GM10248 (cell line): ENCODE measurements at regions of chr16 and their contacts with region 1.

Region 1: GRCh38 chr16:15765880-15766279 is 90.9 kb downstream of the MYH11 start:
- DNase-seq: peak; percentile 80
- CTCF ChIP-seq: peak; percentile 71

Region 2: DNA sequence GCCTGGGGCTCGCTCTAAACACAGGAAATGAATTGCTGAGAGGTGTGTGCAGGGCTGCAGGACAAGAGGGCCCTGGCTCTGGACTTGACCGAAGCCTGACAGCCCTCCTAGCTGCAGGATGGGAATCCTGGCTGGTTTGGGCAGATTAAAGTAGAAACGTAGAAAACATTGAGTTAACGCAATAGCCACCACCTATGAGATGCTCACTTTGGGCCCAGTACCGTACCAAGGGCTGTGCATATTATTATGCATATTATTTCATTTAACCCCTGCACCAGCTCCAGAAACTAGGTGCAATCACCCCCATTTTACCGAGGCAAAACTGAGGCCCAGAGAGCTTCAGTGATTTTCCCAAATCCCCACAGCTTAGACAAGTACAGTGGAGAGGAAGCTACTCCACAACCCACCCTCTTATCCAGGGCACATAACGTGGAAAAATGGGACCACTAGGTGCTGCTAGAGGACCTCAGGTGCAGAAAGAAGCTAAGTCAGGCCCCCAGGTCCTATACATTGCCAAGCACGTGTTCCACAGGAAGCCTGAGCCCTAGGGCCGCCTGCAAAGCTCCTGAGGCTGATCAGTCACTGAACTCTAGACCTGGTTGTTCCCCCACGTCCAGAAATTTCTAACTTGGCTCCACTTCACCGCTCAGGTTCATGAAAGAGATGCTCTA is 11.8 kb after region 1 on chr16:
- CTCF ChIA-PET with region 1: interaction called, 11 read pairs
- POLR2A ChIA-PET with region 1: no interaction called
- DNase-seq: peak; percentile 29
- CTCF ChIP-seq: peak; percentile 43

Region 3: GRCh38 chr16:16127469-16128116 is 361.7 kb after region 1 on chr16:
- CTCF ChIA-PET with region 1: interaction called, 21 read pairs
- POLR2A ChIA-PET with region 1: no interaction called
- DNase-seq: peak; percentile 79
- CTCF ChIP-seq: peak; percentile 77